OCI-LY7 (cell line): ENCODE measurements at regions of chr3 and their contacts with region 1.

Region 1: DNA sequence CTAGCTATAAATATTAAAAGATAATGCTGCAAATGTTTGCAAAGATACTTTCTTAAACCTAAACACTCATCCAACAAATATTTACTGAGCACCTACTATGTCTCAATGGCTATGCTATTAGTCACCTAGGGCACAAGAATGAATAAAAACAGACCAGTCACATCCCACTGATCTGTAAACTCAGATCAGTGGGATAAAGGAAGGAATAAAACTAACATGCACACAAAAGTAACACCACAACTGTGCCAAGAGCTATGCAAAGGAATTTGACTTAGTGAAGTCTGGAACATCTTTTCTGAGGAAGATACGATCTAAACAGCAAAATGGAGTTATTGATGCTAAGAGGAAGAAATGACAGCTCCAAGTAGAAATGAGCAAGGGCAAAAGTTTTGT is 56.6 kb downstream of the CBLB start:
- DNase-seq: no peak
- H3K4me3 ChIP-seq: no peak overlapping the region
- H3K27ac ChIP-seq: no peak overlapping the region
- H3K4me1 ChIP-seq: peaks cover 37% of the 10 kb centered on the region
- CTCF ChIP-seq: no peak

Region 2: DNA sequence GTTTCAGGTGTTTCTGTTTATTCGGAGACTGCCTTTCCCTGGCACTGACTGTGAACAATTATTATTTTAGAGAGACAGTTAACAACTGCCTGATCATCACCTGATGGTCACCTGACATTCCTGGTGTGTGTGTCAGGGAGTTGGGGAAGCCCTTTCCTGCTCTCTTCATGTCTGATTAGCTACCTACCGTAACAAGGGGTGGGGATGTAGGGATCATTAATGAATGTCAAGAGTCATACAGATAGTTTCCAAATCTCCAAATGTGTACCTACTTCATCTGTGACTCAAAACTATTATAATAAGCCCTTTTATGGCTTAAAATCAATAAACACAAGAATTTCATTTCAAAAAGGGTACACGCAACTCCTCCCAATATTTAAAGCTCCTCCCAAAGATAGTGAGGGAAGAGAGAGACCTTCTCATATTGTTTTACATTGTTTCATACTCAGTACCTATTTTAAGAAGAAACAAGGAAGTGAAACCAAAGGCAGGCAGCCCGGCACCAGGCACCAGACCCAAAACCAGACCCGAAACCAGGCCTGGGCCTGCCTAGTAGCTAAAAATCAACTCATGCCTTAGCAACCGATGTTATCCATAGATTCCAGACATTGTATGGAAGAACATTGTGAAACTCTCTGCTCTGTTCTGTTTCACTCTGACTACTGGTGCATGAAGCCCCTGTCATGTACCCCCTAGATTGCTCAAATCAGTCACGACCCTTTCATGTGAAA is 1290.4 kb before region 1 on chr3:
- CTCF ChIA-PET with region 1: no interaction called
- POLR2A ChIA-PET with region 1: no interaction called
- intact Hi-C with region 1: loop called (anchors 10 kb)
- DNase-seq: peak; percentile 79
- H3K4me3 ChIP-seq: peak overlapping the region; percentile 67
- H3K27ac ChIP-seq: peak overlapping the region; percentile 96
- H3K4me1 ChIP-seq: peaks cover 86% of the 10 kb centered on the region
- CTCF ChIP-seq: no peak

Region 3: GRCh38 chr3:105145511-105145910 is 666.7 kb before region 1 on chr3:
- CTCF ChIA-PET with region 1: no interaction called
- POLR2A ChIA-PET with region 1: no interaction called
- intact Hi-C with region 1: no loop called
- DNase-seq: no peak
- H3K4me3 ChIP-seq: no peak overlapping the region
- H3K27ac ChIP-seq: no peak overlapping the region
- H3K4me1 ChIP-seq: no peaks in the 10 kb centered on the region
- CTCF ChIP-seq: no peak

Region 4: DNA sequence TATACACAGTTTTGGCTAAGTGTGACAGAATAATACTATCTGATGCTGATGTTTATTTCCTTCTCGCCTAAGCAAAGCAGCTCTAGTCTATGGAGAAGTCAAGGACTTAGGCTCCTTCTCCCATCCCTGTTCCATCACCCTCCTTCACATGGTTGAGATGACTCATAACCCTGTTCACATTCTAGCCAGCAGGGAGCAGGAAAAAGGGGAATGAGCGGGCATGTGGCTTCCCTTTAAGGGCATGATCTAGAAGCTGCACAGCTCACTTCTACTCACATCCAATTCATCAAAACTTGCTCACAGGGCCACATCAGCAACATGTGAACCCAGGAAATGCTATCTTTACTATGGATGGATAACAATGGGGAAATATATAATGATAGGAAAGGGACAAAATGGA is 15.8 kb after region 1 on chr3:
- CTCF ChIA-PET with region 1: no interaction called
- POLR2A ChIA-PET with region 1: interaction called, 16 read pairs
- intact Hi-C with region 1: no loop called
- DNase-seq: no peak
- H3K4me3 ChIP-seq: no peak overlapping the region
- H3K27ac ChIP-seq: no peak overlapping the region
- H3K4me1 ChIP-seq: peaks cover 78% of the 10 kb centered on the region
- CTCF ChIP-seq: no peak

Region 5: GRCh38 chr3:105836533-105836932 is 24.3 kb after region 1 on chr3:
- CTCF ChIA-PET with region 1: no interaction called
- POLR2A ChIA-PET with region 1: interaction called, 13 read pairs
- intact Hi-C with region 1: no loop called
- DNase-seq: peak; percentile 71
- H3K4me3 ChIP-seq: peak overlapping the region; percentile 65
- H3K27ac ChIP-seq: peak overlapping the region; percentile 77
- H3K4me1 ChIP-seq: peaks cover 77% of the 10 kb centered on the region
- CTCF ChIP-seq: peak; percentile 61